Heart left ventricle (tissue), 16 donors: ENCODE measurements at regions of chr7 and their contacts with region 1.

Region 1: DNA sequence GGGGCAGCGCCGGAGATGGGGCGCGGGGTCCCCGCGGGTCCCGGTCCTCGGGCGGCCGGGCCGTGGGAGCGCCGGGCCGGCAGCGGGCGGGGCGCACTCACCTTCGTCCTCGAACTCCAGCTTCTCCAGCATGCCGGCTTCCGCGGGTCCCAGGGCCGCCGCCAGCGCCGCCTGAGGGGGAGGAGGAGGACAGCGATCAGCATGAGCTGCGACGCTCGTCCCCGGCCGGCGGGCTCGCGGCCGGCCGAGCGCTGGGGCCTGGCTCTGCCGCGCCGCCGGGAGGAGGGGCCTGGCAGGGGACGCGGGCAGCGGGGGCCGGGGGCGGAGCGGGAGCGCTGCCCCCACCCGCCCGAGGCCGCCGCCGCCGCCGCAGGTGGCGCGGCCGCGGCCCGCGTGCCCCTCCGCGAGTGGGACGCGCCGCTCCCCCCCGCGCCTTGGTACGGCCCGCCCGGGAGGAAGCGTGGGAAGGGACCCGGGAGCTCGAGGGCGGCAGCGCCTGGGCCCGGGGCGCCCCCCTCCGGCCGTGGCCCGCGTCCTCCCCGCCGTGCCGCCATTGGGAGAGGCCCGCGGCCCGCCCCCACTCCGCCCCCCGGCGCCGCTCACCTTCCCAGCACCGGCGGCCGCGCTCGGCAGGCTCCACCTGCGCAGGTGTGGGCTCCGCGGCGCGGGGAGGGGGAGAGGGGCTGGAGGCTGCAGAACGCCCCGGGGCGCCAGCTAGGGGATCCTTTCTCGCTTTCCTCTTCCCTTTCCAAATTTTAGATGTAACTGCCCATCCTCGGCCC is 112.5 kb upstream of the RHEB start:
- DNase-seq: peak; percentile 83 to 94 (median 89)
- ATAC-seq: peak; percentile 49 to 90 (median 84)
- H3K4me3 ChIP-seq: peak overlapping the region; percentile 47 to 94 (median 75)
- H3K27ac ChIP-seq: peak overlapping the region; percentile 85 to 99 (median 94)
- H3K4me1 ChIP-seq: peaks cover 0 to 45% (median 22%) of the 10 kb centered on the region in 12 donors
- H3K27me3 ChIP-seq: no peaks in the 10 kb centered on the region
- CTCF ChIP-seq: peak in 10 of 12 donors; percentile 10 to 59 (median 42)
- POLR2A ChIP-seq: peak in 1 of 2 donors; percentile 43

Region 2: GRCh38 chr7:151368136-151368571 is 264.0 kb before region 1 on chr7:
- intact Hi-C with region 1: loop called in 1 of 10 experiments (anchors 5 kb)
- DNase-seq: peak; percentile 79 to 88 (median 85)
- ATAC-seq: peak; percentile 84 to 97 (median 96)
- H3K4me3 ChIP-seq: no peak overlapping the region
- H3K27ac ChIP-seq: peak overlapping the region in 1 of 12 donors; percentile 63
- H3K4me1 ChIP-seq: peaks cover 0 to 17% (median 6%) of the 10 kb centered on the region in 12 donors
- H3K27me3 ChIP-seq: no peaks in the 10 kb centered on the region
- CTCF ChIP-seq: peak; percentile 91 to 98 (median 95)
- POLR2A ChIP-seq: no peak

Region 3: DNA sequence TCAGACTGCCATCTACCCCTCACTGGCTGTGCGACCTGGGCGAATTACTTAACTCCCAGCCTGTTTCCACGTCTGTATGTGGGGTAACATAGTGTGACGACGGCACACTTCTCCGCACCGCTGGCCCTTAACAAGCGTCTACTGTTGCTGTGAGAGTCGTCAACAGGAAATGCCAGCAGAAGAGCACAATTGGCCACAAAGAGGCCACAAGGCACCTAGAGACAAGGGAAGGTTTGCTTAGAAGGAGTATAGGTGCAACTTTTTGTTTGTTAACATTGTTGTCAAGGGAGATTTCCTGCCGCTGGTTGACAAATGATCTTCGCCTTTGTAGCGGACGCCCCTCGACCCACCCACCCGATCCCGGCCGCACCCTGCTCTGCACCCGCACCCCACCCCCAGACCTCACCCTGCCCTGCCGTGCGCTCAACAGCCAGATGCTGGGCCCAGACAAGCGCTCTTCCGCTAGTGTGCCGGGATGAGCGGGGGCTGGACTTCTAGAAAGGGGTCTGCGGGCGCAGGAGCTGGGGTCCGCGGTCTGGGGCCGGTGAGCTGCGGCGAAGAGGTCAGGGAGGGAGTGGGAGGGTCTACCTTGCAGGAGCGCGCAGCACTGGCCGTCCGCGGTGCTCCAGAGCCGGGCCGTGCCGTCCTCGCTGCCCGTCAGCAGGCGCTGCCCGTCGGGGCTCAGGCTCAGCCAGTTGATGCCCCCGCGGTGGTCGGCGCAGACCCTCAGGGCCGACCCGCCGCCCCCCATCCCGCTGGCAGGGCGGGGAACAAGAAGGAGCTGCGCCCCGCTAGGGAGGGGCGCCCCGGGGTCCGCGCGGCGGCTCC is 223.1 kb before region 1 on chr7:
- intact Hi-C with region 1: no loop called
- DNase-seq: peak in 1 of 5 donors; percentile 62
- ATAC-seq: peak in 2 of 4 donors; percentile 6 to 17
- H3K4me3 ChIP-seq: peak overlapping the region; percentile 28 to 53 (median 48)
- H3K27ac ChIP-seq: peak overlapping the region in 3 of 12 donors; percentile 24 to 63 (median 46)
- H3K4me1 ChIP-seq: peaks cover 0 to 32% (median 14%) of the 10 kb centered on the region in 12 donors
- H3K27me3 ChIP-seq: peaks cover 18 to 57% (median 26%) of the 10 kb centered on the region in 9 donors
- CTCF ChIP-seq: no peak
- POLR2A ChIP-seq: no peak

Region 4: GRCh38 chr7:151550656-151551286 is 81.4 kb before region 1 on chr7:
- intact Hi-C with region 1: no loop called
- DNase-seq: no peak
- ATAC-seq: no peak
- H3K4me3 ChIP-seq: no peak overlapping the region
- H3K27ac ChIP-seq: no peak overlapping the region
- H3K4me1 ChIP-seq: peaks cover 0 to 12% (median 3%) of the 10 kb centered on the region in 12 donors
- H3K27me3 ChIP-seq: no peaks in the 10 kb centered on the region
- CTCF ChIP-seq: no peak
- POLR2A ChIP-seq: no peak

Region 5: DNA sequence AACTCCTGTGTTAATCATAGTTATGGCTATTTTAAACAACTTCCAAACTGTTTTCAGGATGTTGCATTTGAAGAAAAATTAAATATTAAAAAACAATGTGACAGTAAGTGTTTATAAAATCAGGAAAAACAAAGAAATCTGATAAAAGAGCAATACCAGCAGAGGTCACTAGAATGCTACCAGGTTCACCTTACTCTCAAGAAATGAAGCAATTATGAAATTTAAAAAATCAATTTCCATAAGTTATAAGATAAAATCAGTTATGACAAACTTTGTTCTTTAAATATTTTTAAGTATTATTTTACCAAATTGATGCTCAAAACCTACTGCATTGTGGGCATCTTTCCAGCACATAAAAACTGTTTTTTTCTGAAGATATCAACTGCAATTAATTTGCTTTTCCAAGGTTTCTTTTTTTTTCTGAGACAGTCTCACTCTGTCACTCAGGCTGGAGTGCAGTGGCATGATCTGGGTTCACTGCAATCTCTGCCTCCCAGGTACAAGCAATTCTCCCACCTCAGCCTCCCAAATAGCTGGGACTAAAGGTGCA is 61.7 kb before region 1 on chr7:
- intact Hi-C with region 1: loop called in 1 of 10 experiments (anchors 10 kb)
- DNase-seq: no peak
- ATAC-seq: no peak
- H3K4me3 ChIP-seq: no peak overlapping the region
- H3K27ac ChIP-seq: no peak overlapping the region
- H3K4me1 ChIP-seq: peaks cover 0 to 14% (median 6%) of the 10 kb centered on the region in 12 donors
- H3K27me3 ChIP-seq: no peaks in the 10 kb centered on the region
- CTCF ChIP-seq: peak in 11 of 12 donors; percentile 22 to 65 (median 44)
- POLR2A ChIP-seq: no peak

Region 6: DNA sequence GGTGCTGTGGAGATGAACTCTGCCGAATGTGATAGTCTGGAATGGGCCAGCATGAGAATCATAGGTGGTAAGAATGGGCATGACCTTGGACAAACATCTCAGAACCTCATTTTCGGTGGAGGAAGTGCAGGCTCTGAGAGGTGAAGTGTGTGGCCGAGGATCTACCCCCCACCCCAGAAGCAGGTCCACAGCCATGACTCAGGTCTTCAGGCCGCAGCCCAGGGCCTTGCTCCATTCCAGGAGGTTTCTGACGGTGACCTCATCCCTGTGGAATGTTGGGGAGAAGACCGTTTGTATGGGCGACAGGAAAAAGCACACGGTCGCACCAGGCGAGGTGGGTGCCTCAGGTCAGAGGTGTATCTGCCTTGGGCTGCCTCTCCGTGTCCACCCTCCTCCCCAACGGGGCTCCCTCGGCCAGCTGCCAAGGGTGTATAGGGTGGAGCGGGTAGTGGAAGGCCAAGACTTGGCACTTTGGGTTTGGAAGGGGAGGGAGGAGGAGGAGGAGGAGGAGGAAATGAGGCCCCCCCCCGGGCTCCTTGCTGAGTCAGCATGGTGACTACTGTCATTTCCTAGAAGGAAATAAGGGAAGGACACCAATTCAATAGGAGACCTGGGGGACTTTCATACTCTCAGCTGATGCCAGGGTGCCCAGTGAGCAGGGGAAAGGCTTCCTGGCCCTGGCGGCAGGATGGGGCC is 55.5 kb after region 1 on chr7:
- intact Hi-C with region 1: loop called in 5 of 10 experiments (anchors 5 to 10 kb)
- DNase-seq: peak; percentile 43 to 79 (median 61)
- ATAC-seq: peak in 3 of 4 donors; percentile 54 to 61 (median 55)
- H3K4me3 ChIP-seq: no peak overlapping the region
- H3K27ac ChIP-seq: peak overlapping the region; percentile 38 to 81 (median 66)
- H3K4me1 ChIP-seq: peaks cover 0 to 64% (median 36%) of the 10 kb centered on the region in 12 donors
- H3K27me3 ChIP-seq: no peaks in the 10 kb centered on the region
- CTCF ChIP-seq: no peak
- POLR2A ChIP-seq: no peak

Region 7: GRCh38 chr7:151705636-151706276 is 73.6 kb after region 1 on chr7:
- intact Hi-C with region 1: loop called in 7 of 10 experiments (anchors 1 to 10 kb)
- DNase-seq: peak in 1 of 5 donors; percentile 38
- ATAC-seq: peak; percentile 29 to 68 (median 52)
- H3K4me3 ChIP-seq: peak overlapping the region in 6 of 12 donors; percentile 3 to 41 (median 19)
- H3K27ac ChIP-seq: peak overlapping the region in 6 of 12 donors; percentile 2 to 88 (median 24)
- H3K4me1 ChIP-seq: peaks cover 0 to 50% (median 17%) of the 10 kb centered on the region in 12 donors
- H3K27me3 ChIP-seq: no peaks in the 10 kb centered on the region
- CTCF ChIP-seq: peak in 11 of 12 donors; percentile 34 to 67 (median 56)
- POLR2A ChIP-seq: no peak